Posterior vena cava (tissue), 2 donors: ENCODE measurements at regions of chr18 and their contacts with region 1.

Region 1: GRCh38 chr18:24346254-24346653 is 51.4 kb downstream of the OSBPL1A start:
- DNase-seq: no peak

Region 2: GRCh38 chr18:23752796-23753195 is 593.5 kb before region 1 on chr18:
- intact Hi-C with region 1: loop called in 1 of 2 experiments (anchors 5 kb)
- DNase-seq: no peak

Region 3: DNA sequence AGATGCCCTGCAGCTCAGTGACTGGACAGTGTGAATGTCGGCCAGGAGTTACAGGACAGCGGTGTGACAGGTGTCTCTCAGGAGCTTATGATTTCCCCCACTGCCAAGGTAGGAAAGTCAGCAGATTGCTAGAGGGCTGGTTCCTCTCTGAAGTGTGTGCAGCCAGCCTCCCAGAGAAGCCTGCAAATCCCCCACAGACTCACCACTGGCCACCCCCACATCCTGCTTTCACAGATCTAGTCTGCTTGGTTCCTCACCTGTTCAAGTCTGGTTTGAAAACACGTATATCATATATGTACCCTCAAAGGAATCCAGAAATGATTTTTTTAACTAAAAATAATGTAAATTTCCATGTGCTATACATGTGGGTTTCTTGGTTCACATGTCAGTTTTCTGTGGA is 535.9 kb before region 1 on chr18:
- intact Hi-C with region 1: no loop called
- DNase-seq: no peak